H1 (cell line): ENCODE measurements at regions of chr20 and their contacts with region 1.

Region 1: DNA sequence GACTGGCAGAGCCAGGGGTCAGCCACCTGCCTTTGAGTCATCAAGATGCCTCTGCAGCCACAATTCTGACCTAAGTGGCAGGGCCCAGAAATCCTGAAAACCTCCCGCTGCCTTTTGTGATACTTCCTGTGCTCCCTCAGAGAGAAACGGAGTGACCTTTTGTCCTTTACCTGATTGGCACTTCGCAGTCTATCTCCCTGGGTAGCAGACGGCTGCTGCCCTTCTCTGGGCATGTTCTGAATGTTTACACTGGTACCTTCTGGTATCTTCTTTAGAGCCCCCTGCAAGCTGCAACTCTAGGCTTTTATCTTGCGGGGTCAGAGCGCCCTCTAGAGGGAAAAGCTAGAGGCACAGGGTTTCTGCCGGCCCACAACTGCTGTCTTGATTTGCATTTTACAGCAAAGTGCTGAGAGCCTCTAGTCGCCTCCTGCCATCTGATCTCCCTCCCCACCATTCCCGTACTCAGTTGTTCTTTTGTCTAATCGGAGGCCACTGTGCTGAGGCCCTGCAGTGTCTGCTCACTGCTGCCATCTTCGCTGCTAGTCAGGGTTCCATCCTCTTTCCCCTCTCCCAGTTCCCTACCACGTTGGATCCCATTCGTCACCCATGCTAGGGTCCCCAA is 26.9 kb downstream of the SPATA2 start:
- DNase-seq: peak; percentile 76 to 94
- H3K4me3 ChIP-seq: no peak overlapping the region
- H3K27ac ChIP-seq: no peak overlapping the region
- H3K4me1 ChIP-seq: peaks cover 0 to 19% (median 11%) of the 10 kb centered on the region in 4 experiments; a peak in 5 of 7 replicates
- H3K27me3 ChIP-seq: no peaks in the 10 kb centered on the region
- CTCF ChIP-seq: peak; percentile 70 to 91 (median 88)
- EP300 ChIP-seq: no peak
- POLR2A ChIP-seq: no peak
- RAD21 ChIP-seq: peak; percentile 92

Region 2: GRCh38 chr20:49713753-49714712 is 174.4 kb before region 1 on chr20 and contains the start of gene B4GALT5:
- CTCF ChIA-PET with region 1: interaction called, 14 read pairs
- POLR2A ChIA-PET with region 1: interaction called, 4 read pairs
- DNase-seq: peak; percentile 82 to 88
- H3K4me3 ChIP-seq: peak within 1 kb of the TSS; percentile 77 to 96 (median 81)
- H3K27ac ChIP-seq: peak within 1 kb of the TSS; percentile 66
- H3K4me1 ChIP-seq: peaks cover 3 to 6% (median 5%) of the 10 kb centered on the region in 4 experiments; a peak in 6 of 7 replicates
- H3K27me3 ChIP-seq: no peaks in the 10 kb centered on the region
- CTCF ChIP-seq: no peak
- EP300 ChIP-seq: peak in 1 of 2 experiments; percentile 53; a peak in 1 of 3 replicates
- POLR2A ChIP-seq: no peak
- RAD21 ChIP-seq: peak; percentile 17 to 32; a peak in 2 of 4 replicates
- total RNA-seq, gene B4GALT5: 73.5 and 75.4 TPM in 2 replicates

Region 3: GRCh38 chr20:49846206-49846807 is 42.1 kb before region 1 on chr20:
- CTCF ChIA-PET with region 1: interaction called, 72 read pairs
- POLR2A ChIA-PET with region 1: no interaction called
- DNase-seq: no peak
- H3K4me3 ChIP-seq: no peak overlapping the region
- H3K27ac ChIP-seq: no peak overlapping the region
- H3K4me1 ChIP-seq: peaks cover 0 to 5% (median 4%) of the 10 kb centered on the region in 4 experiments; a peak in 4 of 7 replicates
- H3K27me3 ChIP-seq: no peaks in the 10 kb centered on the region
- CTCF ChIP-seq: peak in 2 of 3 experiments; percentile 60 to 64; a peak in 3 of 4 replicates
- EP300 ChIP-seq: no peak
- POLR2A ChIP-seq: no peak
- RAD21 ChIP-seq: peak; percentile 77 to 79

Region 4: GRCh38 chr20:49868538-49868937 is 19.9 kb before region 1 on chr20:
- CTCF ChIA-PET with region 1: interaction called, 21 read pairs
- POLR2A ChIA-PET with region 1: interaction called, 4 read pairs
- DNase-seq: no peak
- H3K4me3 ChIP-seq: no peak overlapping the region
- H3K27ac ChIP-seq: no peak overlapping the region
- H3K4me1 ChIP-seq: no peaks in the 10 kb centered on the region
- H3K27me3 ChIP-seq: 0 out of 7 replicates have a peak, but pooled peaks cover 0 to 2% (median 0%) of the 10 kb centered on the region in 4 experiments
- CTCF ChIP-seq: no peak
- EP300 ChIP-seq: no peak
- POLR2A ChIP-seq: no peak
- RAD21 ChIP-seq: no peak

Region 5: GRCh38 chr20:49915378-49916145 is 27.1 kb after region 1 on chr20 and contains the start of gene SPATA2:
- CTCF ChIA-PET with region 1: interaction called, 199 read pairs
- POLR2A ChIA-PET with region 1: interaction called, 17 read pairs
- DNase-seq: peak; percentile 80 to 96
- H3K4me3 ChIP-seq: peak within 1 kb of the TSS; percentile 71 to 99 (median 96)
- H3K27ac ChIP-seq: peak within 1 kb of the TSS; percentile 100
- H3K4me1 ChIP-seq: peaks cover 0 to 6% (median 3%) of the 10 kb centered on the region in 4 experiments; a peak in 2 of 7 replicates
- H3K27me3 ChIP-seq: no peaks in the 10 kb centered on the region
- CTCF ChIP-seq: no peak
- EP300 ChIP-seq: no peak
- POLR2A ChIP-seq: peak in 1 of 2 experiments; percentile 55; a peak in 1 of 3 replicates
- RAD21 ChIP-seq: no peak
- total RNA-seq, gene SPATA2: 11.9 and 13.0 TPM in 2 replicates